Activated CD4-positive, alpha-beta T cell treated with anti-CD3 and anti-CD28 coated beads, Interleukin-2, amount 10 ng/mL, durations not matched to agents 24 days and 14 days (primary cell): ENCODE measurements at regions of chr2 and their contacts with region 1.

Region 1: GRCh38 chr2:24920098-24920808 is at the start of gene ADCY3:
- DNase-seq: peak; percentile 90
- H3K4me3 Mint-ChIP-seq: peak within 1 kb of the TSS; percentile 90
- H3K27ac Mint-ChIP-seq: peak within 1 kb of the TSS; percentile 69
- H3K4me1 Mint-ChIP-seq: peaks cover 29% of the 10 kb centered on the region
- H3K27me3 Mint-ChIP-seq: peaks cover 6% of the 10 kb centered on the region
- total RNA-seq, gene ADCY3: 103 and 108 TPM in 2 replicates

Region 2: DNA sequence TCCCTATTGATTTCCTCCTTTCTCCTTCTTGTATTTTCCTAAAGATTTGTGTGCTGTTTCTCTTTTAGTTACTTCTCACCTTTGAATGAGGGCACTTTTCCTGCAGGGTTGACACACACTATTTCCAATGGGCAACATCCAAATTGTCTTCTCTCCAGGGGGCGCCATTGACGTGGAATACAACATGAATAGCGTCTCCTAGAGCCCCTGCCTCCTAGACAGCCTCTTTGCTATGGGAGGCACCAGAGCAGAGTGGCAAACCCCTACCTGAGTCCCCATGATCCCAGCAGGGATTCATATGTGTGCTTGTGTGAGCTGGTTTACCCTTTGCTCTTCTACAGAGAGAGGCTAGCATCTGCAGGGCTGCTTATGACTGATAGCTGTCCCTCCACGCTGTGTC is 498.6 kb before region 1 on chr2:
- intact Hi-C with region 1: loop called (anchors 5 kb)
- DNase-seq: peak; percentile 83
- H3K4me3 Mint-ChIP-seq: no peak overlapping the region
- H3K27ac Mint-ChIP-seq: no peak overlapping the region
- H3K4me1 Mint-ChIP-seq: no peaks in the 10 kb centered on the region
- H3K27me3 Mint-ChIP-seq: peaks cover 14% of the 10 kb centered on the region

Region 3: DNA sequence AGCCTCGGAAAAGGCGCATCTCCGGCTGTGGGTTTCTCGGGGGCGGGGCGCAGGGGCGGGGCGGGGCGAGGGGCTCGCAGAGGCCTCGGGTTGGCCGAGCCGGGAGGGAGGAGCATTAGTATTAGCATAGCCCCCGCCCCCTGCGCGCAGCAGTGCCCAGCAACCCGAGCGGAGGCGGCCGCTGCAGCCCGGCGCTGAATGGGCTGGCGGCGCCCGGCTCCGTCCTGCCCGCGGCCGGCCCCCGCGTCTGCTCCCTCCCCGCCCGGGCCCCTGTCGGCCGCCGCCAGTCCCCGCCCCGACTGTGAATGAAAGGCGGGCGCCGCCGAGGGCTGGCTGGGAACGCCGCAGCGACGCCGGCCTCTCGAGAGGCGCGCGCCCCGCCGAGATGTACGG is 121.7 kb after region 1 on chr2 and contains the start of gene EFR3B:
- intact Hi-C with region 1: loop called (anchors 5 kb)
- DNase-seq: peak; percentile 96
- H3K4me3 Mint-ChIP-seq: peak within 1 kb of the TSS; percentile 84
- H3K27ac Mint-ChIP-seq: peak within 1 kb of the TSS; percentile 49
- H3K4me1 Mint-ChIP-seq: peaks cover 22% of the 10 kb centered on the region
- H3K27me3 Mint-ChIP-seq: peaks cover 48% of the 10 kb centered on the region
- total RNA-seq, gene EFR3B: 0.09 and 0.12 TPM in 2 replicates